Right ventricle myocardium superior (tissue), 1 donor: ENCODE measurements at regions of chr11 and their contacts with region 1.

Region 1: GRCh38 chr11:133078591-133079404 is 453.5 kb downstream of the OPCML start:
- DNase-seq: peak; percentile 56
- ATAC-seq: peak; percentile 59

Region 2: DNA sequence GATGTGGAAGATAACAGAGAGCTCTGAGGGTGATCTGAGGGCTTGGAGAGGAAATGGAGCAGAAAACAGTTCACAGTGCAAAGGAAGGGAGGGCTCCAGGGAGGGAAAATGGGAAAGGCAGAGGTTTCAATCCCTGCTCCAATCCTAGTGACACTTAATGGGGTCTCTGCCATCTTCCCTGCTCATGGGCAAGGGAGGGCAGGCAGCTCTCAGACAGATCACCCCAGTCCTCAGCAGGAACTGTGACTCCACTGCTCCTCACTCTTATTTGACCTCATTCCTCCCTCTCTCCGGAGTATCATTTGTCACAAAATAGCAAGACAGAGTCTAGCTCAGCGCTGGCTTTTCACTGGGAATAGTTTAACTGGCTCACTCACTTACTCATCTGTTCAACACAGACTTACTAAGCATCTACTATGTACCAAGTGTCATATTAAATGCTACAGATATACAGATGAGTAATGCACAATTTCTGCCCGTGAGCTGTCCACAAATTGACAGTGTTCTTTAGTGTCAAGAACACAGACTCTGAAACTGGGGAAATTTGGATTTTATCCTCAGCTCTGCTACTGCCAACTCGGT is 363.8 kb before region 1 on chr11:
- intact Hi-C with region 1: no loop called
- DNase-seq: no peak
- ATAC-seq: no peak

Region 3: DNA sequence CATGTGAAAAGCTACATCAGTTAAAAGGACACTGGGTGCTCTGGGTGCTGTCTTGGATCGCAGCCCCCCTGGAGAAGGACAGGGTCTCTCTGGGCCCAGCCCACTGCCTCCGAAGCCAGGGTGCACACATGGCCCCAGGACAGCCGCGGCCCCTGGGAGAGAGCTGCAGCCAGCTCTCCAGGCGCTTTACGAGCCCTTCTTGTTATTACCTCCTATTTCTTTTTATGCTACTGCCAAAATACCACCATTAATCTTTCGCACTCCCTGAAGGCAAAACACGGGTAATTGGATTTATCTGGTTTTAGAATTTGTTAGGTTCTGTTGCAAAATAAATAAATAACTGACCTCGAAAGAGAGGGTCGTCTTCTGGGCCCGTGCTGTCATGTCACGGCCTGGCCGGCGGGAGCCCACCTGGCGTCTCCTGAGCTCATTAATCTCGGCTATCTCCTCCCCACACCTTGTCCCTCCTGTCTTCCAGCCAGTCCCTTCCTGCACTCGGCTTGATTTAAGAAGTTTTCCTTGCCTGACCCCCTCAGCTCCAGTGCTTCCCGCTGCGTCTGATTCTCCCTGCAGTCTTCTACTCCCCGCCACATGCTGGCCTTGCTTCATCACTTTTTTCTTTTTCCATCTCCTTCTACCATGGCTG is 158.2 kb before region 1 on chr11:
- intact Hi-C with region 1: no loop called
- DNase-seq: no peak
- ATAC-seq: no peak

Region 4: DNA sequence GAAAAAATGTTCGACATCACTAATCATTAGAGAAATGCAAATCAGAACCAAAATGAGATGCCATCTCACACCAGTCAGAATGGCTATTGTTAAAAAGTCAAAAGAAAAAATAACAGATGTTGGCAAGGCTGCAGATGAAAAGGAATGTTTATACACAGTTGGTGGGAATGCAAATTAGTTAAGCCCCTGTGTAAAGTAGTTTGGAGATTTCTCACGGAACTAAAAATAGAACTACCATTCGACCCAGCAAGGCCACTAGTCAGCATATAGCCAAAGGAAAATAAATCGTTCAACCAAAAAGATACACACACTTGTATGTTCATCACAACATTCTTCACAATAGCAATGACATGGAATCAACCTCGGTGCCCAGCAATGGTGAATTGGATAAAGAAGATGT is 49.7 kb before region 1 on chr11:
- intact Hi-C with region 1: no loop called
- DNase-seq: no peak
- ATAC-seq: no peak

Region 5: GRCh38 chr11:133040289-133040900 is 38.4 kb before region 1 on chr11:
- intact Hi-C with region 1: no loop called
- DNase-seq: no peak
- ATAC-seq: no peak

Region 6: GRCh38 chr11:133160754-133161153 is 82.0 kb after region 1 on chr11:
- intact Hi-C with region 1: loop called (anchors 2 kb)
- DNase-seq: no peak
- ATAC-seq: no peak

Region 7: DNA sequence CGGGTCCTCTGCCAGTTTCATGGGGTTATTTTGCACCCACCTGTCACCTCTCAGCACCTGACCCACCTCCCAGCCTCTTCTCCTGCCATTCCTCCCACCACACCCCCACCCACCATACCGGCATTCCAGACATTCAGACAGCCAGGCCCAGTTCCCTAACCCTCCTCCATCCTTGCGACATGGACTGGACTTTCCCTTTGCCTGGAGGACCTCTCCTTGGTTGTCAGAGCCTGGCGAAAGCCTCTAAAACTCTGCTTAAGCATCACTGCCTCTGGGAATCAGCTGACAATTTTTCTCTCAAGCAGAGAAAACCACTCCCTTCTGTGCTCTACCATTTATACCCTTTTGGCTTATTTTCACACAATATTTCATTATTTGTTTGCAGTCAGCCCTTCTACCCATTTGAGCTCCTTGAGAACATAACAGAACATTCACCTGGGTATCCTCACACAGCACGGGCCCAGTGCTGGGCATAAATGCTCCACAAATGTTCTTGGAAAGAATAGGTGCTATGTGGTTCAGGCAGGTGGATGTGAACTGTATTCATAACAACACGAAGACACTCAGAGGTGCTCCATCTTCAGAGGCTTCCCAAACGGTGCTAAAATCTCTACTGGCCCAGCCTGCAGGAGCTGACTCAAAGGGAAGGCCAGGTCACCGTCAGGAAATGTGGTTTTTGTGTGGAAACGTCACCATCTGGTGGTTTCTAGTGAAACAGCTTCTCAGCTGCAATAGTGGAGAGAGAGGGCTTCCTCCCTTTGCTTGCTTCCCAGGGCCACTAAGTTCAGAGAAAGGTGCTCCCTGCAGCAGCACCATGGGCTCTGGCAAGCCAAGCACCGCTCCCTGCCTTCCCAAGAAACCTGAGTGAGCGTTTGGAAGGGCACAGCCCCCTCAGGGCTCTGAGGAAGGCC is 756.1 kb after region 1 on chr11:
- intact Hi-C with region 1: loop called (anchors 2 kb)
- DNase-seq: no peak
- ATAC-seq: peak; percentile 80